Caco-2 (cell line): ENCODE measurements at regions of chrX and their contacts with region 1.

Region 1: DNA sequence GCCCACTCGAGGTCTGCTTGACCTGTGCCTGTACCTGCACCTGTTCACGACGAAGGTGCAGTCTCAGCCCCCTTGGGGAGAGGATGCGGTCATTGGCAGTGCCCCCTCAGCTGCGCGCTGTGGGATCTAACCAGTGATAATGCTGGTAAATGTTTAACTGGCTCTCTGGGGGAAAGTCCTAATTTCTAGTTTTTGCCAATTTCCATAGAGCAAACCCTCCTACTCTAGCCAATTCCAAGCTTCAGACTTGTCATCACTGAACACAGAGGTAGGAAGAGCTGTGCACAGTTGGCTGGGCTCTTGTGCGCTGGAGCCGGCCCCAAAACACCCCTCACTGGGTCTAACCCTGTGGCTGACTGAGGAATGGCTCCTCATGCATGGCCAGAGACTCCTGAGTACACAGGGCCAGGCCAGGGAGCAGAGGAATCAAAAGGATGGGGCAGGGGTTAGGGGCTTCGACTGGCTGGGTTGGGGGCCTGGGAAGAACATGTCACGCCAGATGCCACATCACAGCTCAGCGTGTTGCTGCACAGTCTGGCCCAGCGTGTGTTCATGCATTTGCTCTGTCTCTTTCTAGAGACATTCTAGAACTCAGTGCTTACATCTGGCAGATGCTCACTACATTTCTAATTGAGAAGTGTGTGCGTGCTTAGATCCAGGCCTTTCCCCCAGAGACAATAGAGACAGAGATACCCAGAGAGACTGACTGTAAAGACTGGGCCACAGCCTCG is 270.8 kb downstream of the BCOR start:
- DNase-seq: no peak
- H3K4me3 ChIP-seq: no peak overlapping the region
- H3K4me3 Mint-ChIP-seq: no peak overlapping the region
- H3K27ac Mint-ChIP-seq: no peak overlapping the region
- H3K4me1 ChIP-seq: peaks cover 18% of the 10 kb centered on the region
- H3K4me1 Mint-ChIP-seq: peaks cover 8% of the 10 kb centered on the region
- H3K27me3 ChIP-seq: no peaks in the 10 kb centered on the region
- H3K27me3 Mint-ChIP-seq: no peaks in the 10 kb centered on the region
- CTCF ChIP-seq: no peak

Region 2: GRCh38 chrX:39795605-39796004 is 31.4 kb before region 1 on chrX:
- CTCF ChIA-PET with region 1: no interaction called
- POLR2A ChIA-PET with region 1: no interaction called
- intact Hi-C with region 1: loop called (anchors 1 kb)
- DNase-seq: no peak
- H3K4me3 ChIP-seq: no peak overlapping the region
- H3K4me3 Mint-ChIP-seq: no peak overlapping the region
- H3K27ac Mint-ChIP-seq: no peak overlapping the region
- H3K4me1 ChIP-seq: no peaks in the 10 kb centered on the region
- H3K4me1 Mint-ChIP-seq: no peaks in the 10 kb centered on the region
- H3K27me3 ChIP-seq: no peaks in the 10 kb centered on the region
- H3K27me3 Mint-ChIP-seq: no peaks in the 10 kb centered on the region
- CTCF ChIP-seq: no peak